Activated CD4-positive, alpha-beta memory T cell treated with anti-CD3 and anti-CD28 coated beads for 36 hours (primary cell): ENCODE measurements at regions of chr6 and their contacts with region 1.

Region 1: GRCh38 chr6:3848925-3849605 is at the start of gene FAM50B:
- DNase-seq: peak; percentile 96
- H3K4me3 Mint-ChIP-seq: peak within 1 kb of the TSS; percentile 71
- H3K27ac Mint-ChIP-seq: peak within 1 kb of the TSS; percentile 91
- H3K4me1 Mint-ChIP-seq: peaks cover 40% of the 10 kb centered on the region
- H3K27me3 Mint-ChIP-seq: no peaks in the 10 kb centered on the region
- total RNA-seq, gene FAM50B: 16.9 to 18.8 TPM

Region 2: DNA sequence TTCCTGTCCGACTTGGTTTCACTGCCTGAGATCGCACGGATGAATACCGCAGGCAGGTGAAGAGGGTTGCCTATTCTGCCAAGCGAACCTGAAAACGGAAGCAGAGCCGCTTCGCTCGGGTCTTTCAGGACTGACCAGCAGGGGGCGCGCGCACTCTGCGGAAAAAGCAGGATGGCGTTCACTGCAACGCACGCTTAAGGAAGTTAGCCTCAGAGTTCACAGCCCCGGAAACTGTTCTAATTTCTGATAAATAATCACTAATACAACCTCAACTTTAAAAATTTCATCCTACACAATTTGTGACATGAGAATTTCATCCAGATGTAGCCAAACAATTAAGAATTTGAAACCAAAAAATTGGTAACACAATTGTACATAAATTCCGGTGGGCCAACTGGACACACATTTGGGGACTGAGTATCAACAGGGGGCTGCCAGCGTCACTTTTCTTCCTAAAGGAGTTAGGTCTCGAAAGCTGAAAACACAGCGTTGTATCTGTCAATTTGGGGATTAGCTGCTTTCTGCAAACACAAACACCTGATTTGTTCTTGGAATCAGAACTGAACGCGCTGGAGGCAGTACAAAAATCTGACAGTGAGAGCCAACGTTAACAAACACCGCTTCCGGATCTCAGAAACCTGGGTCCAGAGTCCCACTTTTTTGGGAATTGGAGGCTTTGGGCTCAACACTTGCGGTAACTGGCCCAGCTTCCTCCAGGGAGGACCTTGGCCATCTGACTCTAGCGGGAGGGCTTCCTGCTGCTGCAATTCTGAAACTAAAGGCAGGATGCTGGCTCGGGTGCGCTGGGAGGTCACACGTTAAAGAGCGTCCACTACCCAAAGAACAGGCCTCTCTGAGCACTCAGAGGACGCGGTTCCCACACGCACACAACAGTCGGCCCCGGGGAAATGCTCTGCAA is 106.4 kb before region 1 on chr6:
- CTCF ChIA-PET with region 1: interaction called, 20 read pairs
- POLR2A ChIA-PET with region 1: no interaction called
- intact Hi-C with region 1: loop called (anchors 2 kb)
- DNase-seq: peak; percentile 92
- H3K4me3 Mint-ChIP-seq: peak overlapping the region; percentile 40
- H3K27ac Mint-ChIP-seq: no peak overlapping the region
- H3K4me1 Mint-ChIP-seq: peaks cover 14% of the 10 kb centered on the region
- H3K27me3 Mint-ChIP-seq: peaks cover 13% of the 10 kb centered on the region

Region 3: DNA sequence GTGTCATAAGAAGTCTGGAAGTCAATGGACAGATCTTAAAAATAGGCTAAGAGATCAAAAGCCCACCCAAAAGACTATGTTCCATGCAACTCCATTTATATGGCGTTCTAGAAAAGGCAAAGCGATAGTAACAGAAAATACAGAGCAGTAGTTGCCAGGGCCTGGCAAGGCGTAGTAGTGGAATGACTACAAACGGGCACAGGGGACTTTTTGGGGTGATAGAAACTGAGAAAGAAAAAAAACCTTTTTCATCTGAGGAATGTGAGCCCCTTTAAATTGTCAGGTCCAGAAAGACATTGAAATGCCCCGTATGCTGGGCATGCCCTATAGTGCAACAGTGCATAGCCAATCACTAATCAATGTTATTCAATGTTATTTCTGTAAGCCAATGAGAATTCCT is 47.1 kb before region 1 on chr6:
- CTCF ChIA-PET with region 1: no interaction called
- POLR2A ChIA-PET with region 1: no interaction called
- intact Hi-C with region 1: loop called (anchors 2 kb)
- DNase-seq: peak; percentile 54
- H3K4me3 Mint-ChIP-seq: no peak overlapping the region
- H3K27ac Mint-ChIP-seq: no peak overlapping the region
- H3K4me1 Mint-ChIP-seq: peaks cover 11% of the 10 kb centered on the region
- H3K27me3 Mint-ChIP-seq: peaks cover 4% of the 10 kb centered on the region

Region 4: DNA sequence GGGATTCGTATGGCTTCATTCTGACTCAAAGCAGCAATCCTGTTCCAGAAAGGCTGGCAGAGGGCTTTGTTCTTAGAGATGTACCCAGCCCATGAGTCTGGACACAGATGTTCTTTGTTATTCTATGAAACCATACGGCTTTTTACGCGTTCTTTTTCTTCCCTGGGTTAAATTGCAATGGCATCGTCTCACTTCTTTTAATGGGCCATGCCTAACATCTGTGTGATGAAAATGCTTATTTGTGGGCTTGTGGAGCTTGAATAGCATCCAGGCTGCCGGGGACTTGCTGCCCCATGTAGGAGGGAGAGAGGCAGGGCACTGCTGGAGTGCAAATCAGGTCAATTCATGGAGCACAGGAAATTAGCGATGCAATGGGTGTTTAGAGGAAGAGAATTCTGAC is 19.5 kb after region 1 on chr6:
- CTCF ChIA-PET with region 1: interaction called, 75 read pairs
- POLR2A ChIA-PET with region 1: interaction called, 64 read pairs
- intact Hi-C with region 1: loop called (anchors 1 kb)
- DNase-seq: no peak
- H3K4me3 Mint-ChIP-seq: peak overlapping the region; percentile 24
- H3K27ac Mint-ChIP-seq: peak overlapping the region; percentile 92
- H3K4me1 Mint-ChIP-seq: peaks cover 45% of the 10 kb centered on the region
- H3K27me3 Mint-ChIP-seq: peaks cover 8% of the 10 kb centered on the region

Region 5: GRCh38 chr6:3919130-3919628 is 70.1 kb after region 1 on chr6:
- CTCF ChIA-PET with region 1: interaction called, 8 read pairs
- POLR2A ChIA-PET with region 1: interaction called, 3 read pairs
- intact Hi-C with region 1: loop called (anchors 2 kb)
- DNase-seq: no peak
- H3K4me3 Mint-ChIP-seq: no peak overlapping the region
- H3K27ac Mint-ChIP-seq: no peak overlapping the region
- H3K4me1 Mint-ChIP-seq: peaks cover 19% of the 10 kb centered on the region
- H3K27me3 Mint-ChIP-seq: peaks cover 7% of the 10 kb centered on the region

Region 6: GRCh38 chr6:3977875-3978711 is 129.0 kb after region 1 on chr6:
- CTCF ChIA-PET with region 1: interaction called, 22 read pairs
- POLR2A ChIA-PET with region 1: no interaction called
- intact Hi-C with region 1: no loop called
- DNase-seq: peak; percentile 62
- H3K4me3 Mint-ChIP-seq: no peak overlapping the region
- H3K27ac Mint-ChIP-seq: no peak overlapping the region
- H3K4me1 Mint-ChIP-seq: peaks cover 7% of the 10 kb centered on the region
- H3K27me3 Mint-ChIP-seq: peaks cover 1% of the 10 kb centered on the region

Region 7: DNA sequence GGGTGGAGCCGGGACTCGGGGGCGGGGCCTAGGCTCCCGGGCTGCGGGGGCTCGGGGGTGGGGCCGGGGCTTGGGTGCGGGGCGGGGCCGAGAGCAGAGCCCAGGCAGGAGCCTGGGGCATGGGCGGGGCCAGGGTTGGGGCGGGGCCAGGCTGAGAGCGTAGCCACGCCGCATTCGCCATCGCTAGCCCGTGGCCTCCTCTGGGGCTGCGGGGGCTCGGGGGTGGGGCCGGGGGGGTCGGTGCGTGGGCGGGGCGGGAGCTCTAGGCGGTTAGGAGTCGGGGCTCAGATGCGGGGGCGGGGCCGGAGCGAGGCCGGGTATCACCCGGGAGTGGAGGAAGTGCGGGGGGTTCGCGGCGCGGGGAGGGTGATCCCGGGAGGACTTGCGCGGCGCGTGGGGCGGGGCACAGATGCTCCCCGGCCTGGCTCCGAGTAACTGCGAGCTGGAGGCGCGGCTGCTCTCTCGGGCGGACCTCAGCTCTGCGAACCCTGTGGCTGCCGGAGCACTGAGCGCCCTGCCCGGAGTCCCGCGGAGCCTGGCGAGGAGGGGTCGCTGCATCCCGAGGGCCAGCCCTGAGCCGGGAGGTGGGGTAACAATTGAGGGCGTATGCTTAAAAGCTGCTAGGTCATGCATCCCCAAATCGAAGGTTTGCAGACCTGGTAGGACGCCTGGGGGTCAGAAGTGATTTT is 286.7 kb after region 1 on chr6:
- CTCF ChIA-PET with region 1: no interaction called
- POLR2A ChIA-PET with region 1: no interaction called
- intact Hi-C with region 1: loop called (anchors 5 kb)
- DNase-seq: peak; percentile 96
- H3K4me3 Mint-ChIP-seq: peak overlapping the region; percentile 80
- H3K27ac Mint-ChIP-seq: peak overlapping the region; percentile 78
- H3K4me1 Mint-ChIP-seq: peaks cover 41% of the 10 kb centered on the region
- H3K27me3 Mint-ChIP-seq: no peaks in the 10 kb centered on the region